ENCODE measurements at regions of chr2 and their contacts with region 1.

Region 1: DNA sequence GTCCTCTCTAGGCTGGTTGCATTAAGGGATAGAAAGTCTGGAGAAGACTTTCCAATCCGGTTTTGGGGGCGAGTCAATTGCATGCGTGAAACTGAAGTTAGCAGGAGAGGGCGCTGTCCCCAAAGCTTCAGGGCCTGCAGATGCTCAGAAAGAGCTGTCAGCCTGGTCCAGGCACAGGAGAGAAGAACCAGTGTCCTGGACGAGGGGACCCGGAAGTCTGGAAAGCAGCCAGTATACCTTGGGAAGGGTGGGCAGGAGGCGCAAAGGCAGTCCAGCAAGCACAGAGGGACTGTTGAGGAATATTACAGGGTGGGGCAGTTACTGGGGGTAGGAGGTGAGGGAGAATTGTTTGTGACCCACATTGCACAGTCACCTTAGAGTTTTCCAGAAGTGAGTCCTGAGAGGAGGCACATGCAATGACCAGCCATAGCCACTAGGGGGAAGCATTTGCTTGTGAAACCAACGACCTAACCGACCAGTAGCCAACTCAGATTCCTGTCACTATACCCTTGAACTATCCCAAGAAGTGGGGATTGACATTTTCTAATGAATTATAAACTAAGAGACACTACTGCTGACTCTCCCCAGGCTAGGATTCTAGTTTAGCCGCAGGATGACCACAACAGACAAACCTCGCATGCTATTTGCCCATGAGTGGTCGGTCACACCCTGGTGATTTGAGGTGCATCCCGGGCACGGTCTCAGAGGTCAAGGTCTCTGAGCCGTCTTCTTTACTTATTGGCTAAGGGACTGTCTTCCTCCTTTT is 172.8 kb downstream of the RDH14 start:
- DNase-seq: peak; percentile 54 to 82
- ATAC-seq: peak; percentile 95 to 97
- H3K4me3 ChIP-seq: no peak overlapping the region
- H3K27ac ChIP-seq: peak overlapping the region; percentile 31 to 56; a peak in 3 of 6 replicates
- H3K4me1 ChIP-seq: no peaks in the 10 kb centered on the region
- CTCF ChIP-seq: peak; percentile 97
- EP300 ChIP-seq: no peak
- POLR2A ChIP-seq: no peak
- RAD21 ChIP-seq: peak; percentile 95 to 96

Region 2: DNA sequence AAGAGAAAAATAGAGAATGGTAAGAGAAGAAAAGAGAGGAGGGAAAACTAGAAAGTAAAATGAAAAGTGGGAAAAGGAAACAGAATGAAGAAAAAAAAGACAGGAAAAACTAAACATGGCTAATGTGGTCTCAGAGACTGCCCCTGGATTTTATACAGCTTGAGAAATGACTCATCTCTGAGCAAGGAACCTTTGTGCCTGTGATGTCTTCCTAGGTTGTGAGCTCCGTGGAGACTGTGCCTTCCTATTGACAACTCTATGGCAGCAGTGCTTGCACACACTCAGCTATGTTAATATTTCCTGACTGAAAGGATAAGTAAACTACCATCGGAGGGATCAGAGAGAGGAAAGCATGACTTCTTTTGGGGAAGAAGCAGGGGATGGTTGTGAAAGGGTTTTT is 30.9 kb before region 1 on chr2:
- CTCF ChIA-PET with region 1: no interaction called
- POLR2A ChIA-PET with region 1: no interaction called
- DNase-seq: peak in 1 of 2 experiments; percentile 34
- ATAC-seq: peak; percentile 63 to 87; a peak in 4 of 6 replicates
- H3K4me3 ChIP-seq: no peak overlapping the region
- H3K27ac ChIP-seq: no peak overlapping the region; a peak in 1 of 6 replicates
- H3K4me1 ChIP-seq: peaks cover 9% of the 10 kb centered on the region; the same call in 2 of the 3 replicates
- CTCF ChIP-seq: no peak
- EP300 ChIP-seq: no peak
- POLR2A ChIP-seq: no peak
- RAD21 ChIP-seq: no peak

Region 3: GRCh38 chr2:18413676-18414396 is 26.2 kb after region 1 on chr2:
- CTCF ChIA-PET with region 1: interaction called, 23 read pairs
- POLR2A ChIA-PET with region 1: no interaction called
- DNase-seq: peak; percentile 63 to 69
- ATAC-seq: peak; percentile 98
- H3K4me3 ChIP-seq: no peak overlapping the region
- H3K27ac ChIP-seq: peak overlapping the region; percentile 32 to 58
- H3K4me1 ChIP-seq: peaks cover 19% of the 10 kb centered on the region
- CTCF ChIP-seq: no peak
- EP300 ChIP-seq: no peak
- POLR2A ChIP-seq: no peak
- RAD21 ChIP-seq: no peak